ENCODE measurements at regions of chr18 and their contacts with region 1.

Region 1: GRCh38 chr18:59631583-59632181 is 65.5 kb downstream of the CCBE1 start:
- DNase-seq: peak in 1 of 2 experiments; percentile 59
- H3K4me3 ChIP-seq: no peak overlapping the region
- H3K27ac ChIP-seq: no peak overlapping the region
- H3K4me1 ChIP-seq: peaks cover 0 to 9% (median 3%) of the 10 kb centered on the region in 4 experiments; a peak in 4 of 7 replicates
- H3K27me3 ChIP-seq: no peaks in the 10 kb centered on the region
- CTCF ChIP-seq: peak in 2 of 3 experiments; percentile 80 to 85; a peak in 3 of 4 replicates
- EP300 ChIP-seq: no peak
- POLR2A ChIP-seq: no peak
- RAD21 ChIP-seq: peak; percentile 94 to 95

Region 2: GRCh38 chr18:59617468-59617932 is 14.2 kb before region 1 on chr18:
- CTCF ChIA-PET with region 1: interaction called, 24 read pairs
- POLR2A ChIA-PET with region 1: interaction called, 5 read pairs
- DNase-seq: no peak
- H3K4me3 ChIP-seq: no peak overlapping the region
- H3K27ac ChIP-seq: no peak overlapping the region
- H3K4me1 ChIP-seq: no peaks in the 10 kb centered on the region
- H3K27me3 ChIP-seq: no peaks in the 10 kb centered on the region
- CTCF ChIP-seq: no peak
- EP300 ChIP-seq: no peak
- POLR2A ChIP-seq: no peak
- RAD21 ChIP-seq: no peak

Region 3: DNA sequence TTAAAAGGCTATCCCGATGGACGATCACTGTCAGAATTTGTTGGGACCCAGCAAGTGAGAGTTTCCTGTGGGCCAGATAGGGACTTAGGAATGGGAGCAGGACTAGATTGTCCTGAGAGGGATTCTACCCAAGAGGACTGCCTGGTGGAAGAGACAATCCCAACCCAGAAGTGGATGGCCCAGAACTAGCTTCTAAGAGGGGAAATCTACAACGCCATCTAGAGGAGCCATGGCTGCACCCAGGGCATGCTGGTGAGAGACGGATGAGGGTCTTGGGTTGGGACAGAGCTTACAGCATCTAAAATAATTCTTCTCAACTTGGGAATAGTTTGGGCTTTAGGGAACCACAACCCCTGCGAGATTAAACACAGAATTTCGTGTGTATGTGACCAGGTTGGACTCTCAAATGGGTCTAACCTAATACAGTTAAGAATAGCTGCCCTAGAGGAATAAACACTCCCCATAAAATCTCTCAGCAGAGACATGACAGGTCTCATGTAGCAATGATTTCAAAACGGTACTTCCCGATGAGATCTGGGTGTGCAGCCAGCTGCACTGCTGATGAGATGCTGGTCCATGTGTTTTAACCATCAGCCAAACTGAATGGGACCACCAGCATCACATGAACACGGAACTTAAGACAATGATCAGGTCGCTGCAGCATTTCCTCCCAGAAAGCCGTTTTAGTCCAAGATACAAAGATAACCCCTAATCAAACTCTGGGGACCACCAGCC is 14.7 kb after region 1 on chr18:
- CTCF ChIA-PET with region 1: interaction called, 35 read pairs
- POLR2A ChIA-PET with region 1: interaction called, 8 read pairs
- DNase-seq: no peak
- H3K4me3 ChIP-seq: no peak overlapping the region
- H3K27ac ChIP-seq: no peak overlapping the region
- H3K4me1 ChIP-seq: peaks cover 0 to 9% (median 3%) of the 10 kb centered on the region in 4 experiments; a peak in 4 of 7 replicates
- H3K27me3 ChIP-seq: no peaks in the 10 kb centered on the region; a peak in 2 of 7 replicates
- CTCF ChIP-seq: peak; percentile 50 to 68 (median 66)
- EP300 ChIP-seq: no peak
- POLR2A ChIP-seq: no peak
- RAD21 ChIP-seq: peak; percentile 39 to 55

Region 4: GRCh38 chr18:59681521-59682004 is 49.9 kb after region 1 on chr18:
- CTCF ChIA-PET with region 1: interaction called, 13 read pairs
- POLR2A ChIA-PET with region 1: no interaction called
- DNase-seq: no peak
- H3K4me3 ChIP-seq: no peak overlapping the region
- H3K27ac ChIP-seq: no peak overlapping the region
- H3K4me1 ChIP-seq: peaks cover 0 to 9% (median 4%) of the 10 kb centered on the region in 4 experiments; a peak in 4 of 7 replicates
- H3K27me3 ChIP-seq: 0 out of 7 replicates have a peak, but pooled peaks cover 0 to 2% (median 0%) of the 10 kb centered on the region in 4 experiments
- CTCF ChIP-seq: no peak
- EP300 ChIP-seq: no peak
- POLR2A ChIP-seq: no peak
- RAD21 ChIP-seq: no peak

Region 5: GRCh38 chr18:59787998-59788790 is 156.5 kb after region 1 on chr18:
- CTCF ChIA-PET with region 1: no interaction called
- POLR2A ChIA-PET with region 1: no interaction called
- DNase-seq: no peak
- H3K4me3 ChIP-seq: no peak overlapping the region
- H3K27ac ChIP-seq: no peak overlapping the region
- H3K4me1 ChIP-seq: no peaks in the 10 kb centered on the region
- H3K27me3 ChIP-seq: no peaks in the 10 kb centered on the region
- CTCF ChIP-seq: no peak
- EP300 ChIP-seq: no peak
- POLR2A ChIP-seq: no peak
- RAD21 ChIP-seq: no peak

Region 6: DNA sequence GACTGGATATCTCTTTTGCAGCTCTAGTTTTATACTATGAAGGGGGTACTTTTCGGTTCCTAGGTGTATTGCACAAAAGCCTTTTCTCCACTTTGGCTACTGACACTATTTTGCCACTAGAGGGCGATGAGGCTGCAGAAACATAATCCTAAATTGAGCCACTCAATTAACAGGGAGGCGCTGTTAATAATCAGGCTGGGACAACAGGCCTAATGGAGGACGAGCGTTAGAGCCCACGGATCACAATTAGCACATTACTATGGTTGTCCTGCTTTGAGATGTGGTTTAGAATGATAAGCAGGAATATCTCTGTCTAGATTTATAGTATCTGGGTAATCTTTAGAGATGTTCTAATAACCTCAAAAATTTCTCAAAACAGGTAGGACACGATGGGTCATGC is 205.9 kb after region 1 on chr18:
- CTCF ChIA-PET with region 1: interaction called, 13 read pairs
- POLR2A ChIA-PET with region 1: no interaction called
- DNase-seq: peak in 1 of 2 experiments; percentile 36
- H3K4me3 ChIP-seq: no peak overlapping the region
- H3K27ac ChIP-seq: no peak overlapping the region
- H3K4me1 ChIP-seq: peaks cover 0 to 15% (median 7%) of the 10 kb centered on the region in 4 experiments; a peak in 5 of 7 replicates
- H3K27me3 ChIP-seq: no peaks in the 10 kb centered on the region
- CTCF ChIP-seq: peak in 2 of 3 experiments; percentile 85 to 90; a peak in 3 of 4 replicates
- EP300 ChIP-seq: 0 out of 3 replicates have a peak, but pooled peaks of 1 of the 2 experiments have one; percentile 45
- POLR2A ChIP-seq: no peak
- RAD21 ChIP-seq: peak; percentile 86 to 93

Measured in H1 (cell line).